PC-9 (cell line): ENCODE measurements at regions of chrX and their contacts with region 1.

Region 1: DNA sequence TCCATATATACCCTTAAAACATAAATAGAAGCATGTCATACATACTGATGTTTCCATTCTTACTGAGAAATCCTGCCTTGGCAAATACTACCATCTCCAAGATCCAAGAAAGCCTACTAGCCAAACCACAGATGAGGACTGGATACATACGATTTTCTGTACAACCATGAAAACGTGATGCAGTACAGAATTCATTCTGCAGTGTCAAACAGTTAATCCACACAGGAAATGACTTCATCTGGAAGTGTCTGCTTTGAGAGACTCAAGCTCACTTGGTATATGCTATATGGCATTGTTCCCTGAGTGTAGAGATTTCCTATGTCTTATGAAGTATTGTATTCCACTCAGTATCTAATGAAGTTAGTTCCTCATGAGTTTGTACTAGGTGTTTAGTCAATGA is 94.3 kb downstream of the CT47B1 start:
- DNase-seq: no peak
- H3K4me3 ChIP-seq: no peak overlapping the region
- H3K27ac ChIP-seq: no peak overlapping the region
- H3K4me1 ChIP-seq: peaks cover 7% of the 10 kb centered on the region; the same call in 1 of the 2 replicates
- H3K27me3 ChIP-seq: no peaks in the 10 kb centered on the region
- CTCF ChIP-seq: no peak

Region 2: GRCh38 chrX:120308959-120309872 is 472.2 kb before region 1 on chrX:
- CTCF ChIA-PET with region 1: no interaction called
- POLR2A ChIA-PET with region 1: no interaction called
- intact Hi-C with region 1: no loop called
- DNase-seq: peak in 1 of 2 experiments; percentile 75
- H3K4me3 ChIP-seq: peak overlapping the region; percentile 60
- H3K27ac ChIP-seq: no peak overlapping the region
- H3K4me1 ChIP-seq: 0 out of 2 replicates have a peak, but pooled peaks cover 3% of the 10 kb centered on the region
- H3K27me3 ChIP-seq: no peaks in the 10 kb centered on the region
- CTCF ChIP-seq: no peak; the same call in 1 of the 2 replicates

Region 3: DNA sequence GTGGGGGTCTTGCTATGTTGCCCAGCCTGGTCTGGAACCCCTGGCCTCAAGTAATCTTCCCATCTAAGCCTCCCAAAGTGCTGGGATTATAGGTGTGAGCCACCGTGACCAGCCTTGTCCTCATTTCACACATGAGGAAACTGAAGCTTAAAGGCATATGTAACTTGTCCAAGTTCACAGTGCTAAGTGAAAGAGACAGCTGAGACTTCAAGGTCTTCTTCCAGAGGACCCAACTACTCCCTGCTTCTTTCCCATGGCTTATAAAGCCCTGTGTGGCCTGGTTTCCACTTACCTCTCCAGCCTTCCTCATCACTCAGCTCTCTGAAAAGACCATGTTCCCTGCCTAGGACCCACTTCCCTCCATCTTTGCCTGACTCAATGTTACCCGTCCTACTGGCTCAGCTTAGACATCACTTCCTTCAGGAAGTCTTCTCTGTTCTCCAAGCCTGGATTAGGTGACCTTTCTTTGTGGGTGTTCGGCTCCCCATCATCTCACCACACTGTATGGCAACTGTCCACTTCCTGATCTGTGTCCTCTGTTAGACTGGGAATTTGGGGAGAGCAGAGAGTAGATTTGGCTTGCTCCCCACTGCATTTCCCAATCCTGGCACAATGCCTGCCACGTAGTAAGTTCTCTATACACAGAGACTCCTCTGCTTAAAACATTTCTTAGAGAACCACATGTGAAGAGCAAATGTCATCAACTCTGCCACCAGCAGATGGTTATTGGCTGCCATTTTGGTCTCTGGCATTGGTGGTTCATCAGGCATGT is 281.9 kb before region 1 on chrX:
- CTCF ChIA-PET with region 1: no interaction called
- POLR2A ChIA-PET with region 1: interaction called, 17 read pairs
- intact Hi-C with region 1: no loop called
- DNase-seq: no peak
- H3K4me3 ChIP-seq: no peak overlapping the region
- H3K27ac ChIP-seq: no peak overlapping the region
- H3K4me1 ChIP-seq: peaks cover 9% of the 10 kb centered on the region
- H3K27me3 ChIP-seq: no peaks in the 10 kb centered on the region
- CTCF ChIP-seq: no peak

Region 4: GRCh38 chrX:120726294-120726693 is 55.1 kb before region 1 on chrX:
- CTCF ChIA-PET with region 1: no interaction called
- POLR2A ChIA-PET with region 1: no interaction called
- intact Hi-C with region 1: no loop called
- DNase-seq: no peak
- H3K4me3 ChIP-seq: no peak overlapping the region
- H3K27ac ChIP-seq: no peak overlapping the region
- H3K4me1 ChIP-seq: no peaks in the 10 kb centered on the region
- H3K27me3 ChIP-seq: no peaks in the 10 kb centered on the region
- CTCF ChIP-seq: no peak